Activated CD4-positive, alpha-beta memory T cell treated with anti-CD3 and anti-CD28 coated beads for 36 hours (primary cell): ENCODE measurements at regions of chr5 and their contacts with region 1.

Region 1: DNA sequence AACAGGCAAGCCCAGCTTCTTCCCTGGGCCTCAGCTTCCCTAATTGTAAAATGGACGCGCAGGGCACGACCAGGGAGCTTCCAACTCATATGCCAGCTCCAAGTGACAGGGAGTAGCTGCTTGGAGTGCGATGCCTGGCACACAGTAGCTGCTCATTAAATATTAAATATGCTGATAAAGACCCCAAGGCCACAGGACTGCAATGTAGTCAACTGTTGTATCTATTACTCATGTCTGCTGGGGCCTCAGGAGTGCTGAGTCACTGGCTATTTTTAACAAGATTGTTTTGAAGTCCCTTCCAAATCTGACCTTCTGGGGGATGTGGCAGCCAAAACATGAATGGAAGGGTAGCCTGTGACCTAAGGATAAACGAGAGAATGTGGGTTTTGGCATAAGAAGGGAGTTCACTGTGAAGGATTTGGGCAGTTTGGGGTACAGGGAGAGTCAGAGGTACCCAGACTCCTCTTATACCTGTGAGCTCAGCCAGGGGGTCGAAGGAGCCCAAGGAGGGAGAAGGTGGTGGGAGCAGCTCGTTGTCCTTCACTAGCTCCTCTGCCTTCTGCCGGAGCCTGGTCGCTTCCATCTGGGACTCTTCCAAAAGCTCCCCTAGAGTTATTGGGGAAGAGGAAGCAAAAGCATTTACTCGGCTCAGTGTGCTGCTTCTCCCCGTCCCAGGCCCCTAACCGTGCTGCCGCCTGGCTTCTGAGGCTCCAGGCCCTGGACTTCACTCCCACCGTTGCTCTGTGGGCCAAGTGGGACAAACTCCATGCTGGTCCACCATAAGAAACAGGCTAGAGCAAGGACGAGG is 17.5 kb downstream of the TNIP1 start:
- DNase-seq: no peak
- H3K4me3 Mint-ChIP-seq: no peak overlapping the region
- H3K27ac Mint-ChIP-seq: peak overlapping the region; percentile 94
- H3K4me1 Mint-ChIP-seq: peaks cover 97% of the 10 kb centered on the region
- H3K27me3 Mint-ChIP-seq: no peaks in the 10 kb centered on the region

Region 2: DNA sequence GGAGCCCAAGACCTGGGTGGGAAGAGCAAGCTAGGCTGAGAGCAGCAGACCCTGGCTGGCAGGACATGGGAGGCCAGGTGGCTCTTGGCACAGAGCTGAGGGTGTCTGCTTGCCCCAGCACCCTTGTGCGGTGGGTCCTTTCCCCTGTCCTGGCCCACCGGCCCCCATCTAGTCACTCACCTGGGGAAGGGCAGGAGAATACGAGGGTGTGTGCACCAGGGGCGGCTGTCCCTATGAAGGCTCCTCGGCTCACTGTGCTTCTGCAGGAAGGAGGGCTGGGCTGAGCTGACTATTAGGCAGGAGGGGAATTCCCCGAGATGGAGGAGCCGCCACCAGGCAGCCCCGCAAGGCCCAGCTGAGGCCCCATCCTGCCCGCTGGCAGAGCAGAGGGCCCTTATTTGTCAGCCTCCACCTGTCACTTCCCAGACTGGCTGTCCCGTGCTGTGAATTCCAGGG is 23.6 kb after region 1 on chr5:
- CTCF ChIA-PET with region 1: interaction called, 5 read pairs
- POLR2A ChIA-PET with region 1: interaction called, 115 read pairs
- intact Hi-C with region 1: loop called (anchors 1 kb)
- DNase-seq: peak; percentile 85
- H3K4me3 Mint-ChIP-seq: peak overlapping the region; percentile 89
- H3K27ac Mint-ChIP-seq: peak overlapping the region; percentile 89
- H3K4me1 Mint-ChIP-seq: peaks cover 54% of the 10 kb centered on the region
- H3K27me3 Mint-ChIP-seq: no peaks in the 10 kb centered on the region

Region 3: GRCh38 chr5:151093476-151093889 is 30.1 kb after region 1 on chr5:
- CTCF ChIA-PET with region 1: interaction called, 3 read pairs
- POLR2A ChIA-PET with region 1: interaction called, 4 read pairs
- intact Hi-C with region 1: loop called (anchors 1 kb)
- DNase-seq: no peak
- H3K4me3 Mint-ChIP-seq: peak overlapping the region; percentile 65
- H3K27ac Mint-ChIP-seq: peak overlapping the region; percentile 92
- H3K4me1 Mint-ChIP-seq: peaks cover 64% of the 10 kb centered on the region
- H3K27me3 Mint-ChIP-seq: no peaks in the 10 kb centered on the region

Region 4: DNA sequence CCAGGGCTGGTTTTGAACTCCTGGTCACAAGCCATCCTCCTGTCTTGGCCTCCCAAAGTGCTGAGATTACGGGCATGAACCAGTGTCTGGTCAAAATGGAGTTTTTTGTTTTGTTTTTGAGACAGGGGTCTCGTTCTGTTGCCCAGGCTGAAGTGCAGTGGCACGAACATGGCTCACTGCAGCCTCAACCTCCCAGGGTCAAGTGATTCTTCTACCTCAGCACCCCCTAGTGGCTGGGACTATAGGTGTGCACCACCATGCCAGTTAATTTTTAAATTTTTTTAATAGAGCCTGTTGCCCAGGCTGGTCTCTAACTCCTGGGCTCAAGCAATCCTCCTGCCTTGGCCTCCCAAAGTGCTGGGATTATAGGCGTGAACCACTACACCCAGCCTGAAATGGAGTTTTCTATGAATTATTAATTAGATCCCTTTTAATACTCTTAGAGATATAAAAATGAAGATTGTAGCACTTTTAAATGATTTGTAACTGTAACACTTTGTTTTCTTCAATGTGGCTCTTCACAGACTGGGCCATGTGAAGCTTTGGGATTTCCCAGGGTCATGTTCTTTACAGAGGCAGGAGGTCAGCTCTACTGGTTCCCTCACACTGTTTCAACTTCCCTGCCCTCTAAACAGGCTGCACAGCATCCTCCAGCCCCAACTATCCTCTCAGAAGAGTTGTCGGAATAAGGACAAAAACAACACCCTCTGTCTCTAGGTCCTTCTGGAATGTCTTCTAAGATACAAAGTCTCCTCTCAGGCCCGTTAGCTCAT is 656.1 kb after region 1 on chr5:
- CTCF ChIA-PET with region 1: no interaction called
- POLR2A ChIA-PET with region 1: no interaction called
- intact Hi-C with region 1: no loop called
- DNase-seq: peak; percentile 36
- H3K4me3 Mint-ChIP-seq: no peak overlapping the region
- H3K27ac Mint-ChIP-seq: no peak overlapping the region
- H3K4me1 Mint-ChIP-seq: peaks cover 10% of the 10 kb centered on the region
- H3K27me3 Mint-ChIP-seq: no peaks in the 10 kb centered on the region